H1 (cell line): ENCODE measurements at regions of chr12 and their contacts with region 1.

Region 1: GRCh38 chr12:51083126-51083833 is at the start of gene CSRNP2:
- DNase-seq: peak; percentile 89 to 97
- H3K4me3 ChIP-seq: peak within 1 kb of the TSS; percentile 77 to 98 (median 86)
- H3K27ac ChIP-seq: peak within 1 kb of the TSS; percentile 59
- H3K4me1 ChIP-seq: peaks cover 4 to 6% (median 5%) of the 10 kb centered on the region in 4 experiments; a peak in 4 of 7 replicates
- H3K27me3 ChIP-seq: no peaks in the 10 kb centered on the region
- CTCF ChIP-seq: peak in 1 of 3 experiments; percentile 2; a peak in 2 of 4 replicates
- EP300 ChIP-seq: peak in 1 of 2 experiments; percentile 18; a peak in 1 of 3 replicates
- POLR2A ChIP-seq: peak; percentile 99
- RAD21 ChIP-seq: 0 out of 4 replicates have a peak, but pooled peaks of 1 of the 2 experiments have one; percentile 12
- total RNA-seq, gene CSRNP2: 31.9 and 34.0 TPM in 2 replicates

Region 2: DNA sequence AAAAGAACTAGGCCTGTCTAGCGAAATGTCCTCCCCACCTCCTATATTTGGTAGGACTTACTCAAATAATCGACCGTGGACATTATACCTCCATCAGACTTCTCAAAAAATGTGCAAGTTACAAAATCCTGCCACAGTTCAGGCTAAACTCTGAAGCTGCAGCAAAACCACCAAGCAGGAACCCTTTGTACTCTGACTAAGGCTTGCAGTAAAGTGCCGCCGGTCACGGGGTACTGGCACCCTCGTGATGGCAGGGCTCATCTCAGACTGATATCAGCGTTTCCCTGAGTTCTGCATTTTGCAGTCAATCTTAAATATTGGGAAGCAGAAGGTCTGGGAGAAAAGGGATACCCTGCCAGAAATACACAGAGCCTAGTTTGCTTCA is 74.2 kb before region 1 on chr12:
- CTCF ChIA-PET with region 1: no interaction called
- POLR2A ChIA-PET with region 1: interaction called, 14 read pairs
- DNase-seq: no peak
- H3K4me3 ChIP-seq: no peak overlapping the region
- H3K27ac ChIP-seq: no peak overlapping the region
- H3K4me1 ChIP-seq: peaks cover 0 to 6% (median 3%) of the 10 kb centered on the region in 4 experiments; a peak in 4 of 7 replicates
- H3K27me3 ChIP-seq: no peaks in the 10 kb centered on the region
- CTCF ChIP-seq: no peak
- EP300 ChIP-seq: no peak
- POLR2A ChIP-seq: no peak
- RAD21 ChIP-seq: no peak

Region 3: DNA sequence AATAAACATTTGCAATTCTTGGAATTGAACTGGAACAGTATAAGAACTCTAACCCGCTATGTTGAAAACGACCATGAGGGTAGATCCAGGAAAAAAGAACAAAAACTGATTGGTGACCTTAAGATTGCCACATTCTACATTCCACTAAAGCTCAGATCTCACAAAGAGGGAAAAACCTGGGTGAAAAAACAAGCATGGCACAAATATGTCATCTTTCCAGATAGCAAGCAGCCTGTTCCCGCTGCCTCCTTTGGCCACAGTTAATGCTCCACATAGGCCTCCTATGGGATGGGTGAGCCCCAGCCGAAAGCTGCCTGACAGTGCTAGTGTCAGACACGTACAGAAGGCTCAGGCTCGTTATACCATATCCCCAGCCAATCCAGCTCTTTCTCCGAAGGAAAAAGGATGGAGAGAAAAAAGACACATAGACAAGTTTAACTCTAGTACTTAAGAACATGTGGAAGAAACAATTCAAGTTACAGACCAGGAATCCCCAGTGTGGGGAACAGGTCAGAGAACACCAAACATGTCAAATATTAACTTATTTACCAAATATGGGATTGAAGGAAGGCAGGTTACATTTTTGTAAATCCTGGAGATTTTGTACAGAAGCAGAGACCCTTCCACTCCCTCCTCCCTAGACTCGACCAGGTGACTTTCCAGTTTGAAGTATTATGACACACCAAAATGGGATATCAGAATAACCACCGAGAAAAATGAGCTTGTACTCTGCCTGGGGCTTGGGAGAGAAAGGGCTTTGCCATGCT is 20.5 kb before region 1 on chr12:
- CTCF ChIA-PET with region 1: interaction called, 3 read pairs
- POLR2A ChIA-PET with region 1: interaction called, 17 read pairs
- DNase-seq: no peak
- H3K4me3 ChIP-seq: no peak overlapping the region
- H3K27ac ChIP-seq: no peak overlapping the region
- H3K4me1 ChIP-seq: no peaks in the 10 kb centered on the region
- H3K27me3 ChIP-seq: no peaks in the 10 kb centered on the region
- CTCF ChIP-seq: no peak
- EP300 ChIP-seq: no peak
- POLR2A ChIP-seq: no peak
- RAD21 ChIP-seq: no peak

Region 4: GRCh38 chr12:51103977-51104376 is 20.7 kb after region 1 on chr12:
- CTCF ChIA-PET with region 1: no interaction called
- POLR2A ChIA-PET with region 1: interaction called, 11 read pairs
- DNase-seq: no peak
- H3K4me3 ChIP-seq: no peak overlapping the region
- H3K27ac ChIP-seq: no peak overlapping the region
- H3K4me1 ChIP-seq: no peaks in the 10 kb centered on the region
- H3K27me3 ChIP-seq: no peaks in the 10 kb centered on the region
- CTCF ChIP-seq: no peak
- EP300 ChIP-seq: no peak
- POLR2A ChIP-seq: no peak
- RAD21 ChIP-seq: no peak

Region 5: DNA sequence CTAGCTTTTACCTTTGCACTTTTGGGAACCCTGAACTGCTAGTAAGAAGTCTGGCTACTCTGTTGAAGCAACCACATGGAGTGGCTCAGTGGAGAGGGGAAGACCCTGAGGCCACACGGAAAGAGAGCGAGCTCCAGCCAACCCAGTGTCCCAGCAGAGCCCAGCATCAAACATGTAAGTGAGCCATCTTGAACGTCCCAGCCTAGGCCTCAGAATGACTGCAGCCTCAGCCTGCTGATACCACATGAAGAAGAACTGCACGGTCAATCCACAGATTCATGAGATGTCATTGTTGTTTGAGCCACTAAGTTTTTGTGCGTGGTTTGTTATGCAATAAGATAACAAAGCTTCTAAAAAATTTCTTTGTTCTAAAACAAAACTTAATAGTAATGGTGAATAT is 49.4 kb after region 1 on chr12:
- CTCF ChIA-PET with region 1: no interaction called
- POLR2A ChIA-PET with region 1: interaction called, 14 read pairs
- DNase-seq: no peak
- H3K4me3 ChIP-seq: no peak overlapping the region
- H3K27ac ChIP-seq: no peak overlapping the region
- H3K4me1 ChIP-seq: no peaks in the 10 kb centered on the region
- H3K27me3 ChIP-seq: no peaks in the 10 kb centered on the region
- CTCF ChIP-seq: no peak
- EP300 ChIP-seq: no peak
- POLR2A ChIP-seq: no peak
- RAD21 ChIP-seq: no peak

Region 6: DNA sequence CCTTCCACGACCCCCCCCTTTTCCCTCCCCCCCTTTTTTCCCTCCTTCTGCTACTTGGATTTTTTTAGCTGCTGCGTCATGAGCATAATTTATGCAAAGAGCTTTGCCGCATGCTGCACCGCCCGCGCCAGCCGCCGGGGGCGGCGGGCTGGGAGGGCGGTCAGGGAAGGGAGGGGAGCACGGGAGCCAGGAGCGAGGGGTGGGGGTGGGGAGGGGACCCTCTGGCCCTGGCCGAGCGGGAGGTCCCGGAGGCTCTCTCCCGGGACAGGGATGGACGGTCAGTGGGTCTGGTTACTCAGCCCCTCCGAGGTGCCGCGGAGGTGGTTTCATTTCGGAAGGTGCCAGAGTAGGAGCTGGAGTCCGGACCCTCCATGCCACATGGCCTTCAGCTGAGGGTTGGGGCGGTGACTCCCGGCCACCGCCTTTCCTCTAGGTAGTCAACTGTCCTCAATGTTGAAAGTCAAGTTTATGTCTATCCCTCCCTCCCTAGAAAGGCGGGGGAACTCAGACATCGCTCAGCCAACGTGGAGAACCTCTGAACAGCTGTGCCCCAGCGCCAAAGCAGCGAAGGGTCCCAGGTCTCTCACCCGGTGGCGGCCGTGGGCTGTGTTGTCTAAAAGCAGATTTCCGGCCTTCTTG is 134.8 kb after region 1 on chr12 and contains the start of gene POU6F1:
- CTCF ChIA-PET with region 1: no interaction called
- POLR2A ChIA-PET with region 1: interaction called, 18 read pairs
- DNase-seq: peak in 1 of 2 experiments; percentile 73
- H3K4me3 ChIP-seq: peak within 1 kb of the TSS; percentile 44 to 85 (median 70)
- H3K27ac ChIP-seq: peak within 1 kb of the TSS; percentile 74; the same call in 1 of the 2 replicates
- H3K4me1 ChIP-seq: peaks cover 0 to 10% (median 7%) of the 10 kb centered on the region in 4 experiments; a peak in 5 of 7 replicates
- H3K27me3 ChIP-seq: no peaks in the 10 kb centered on the region
- CTCF ChIP-seq: peak; percentile 29 to 56 (median 48)
- EP300 ChIP-seq: peak in 1 of 2 experiments; percentile 64; a peak in 1 of 3 replicates
- POLR2A ChIP-seq: peak in 1 of 2 experiments; percentile 62; a peak in 1 of 3 replicates
- RAD21 ChIP-seq: peak in 1 of 2 experiments; percentile 38; a peak in 2 of 4 replicates
- total RNA-seq, gene POU6F1: 6.8 and 8.7 TPM in 2 replicates